PC-3 (cell line): ENCODE measurements at regions of chr2 and their contacts with region 1.

Region 1: GRCh38 chr2:138501425-138502283 is at the start of gene SPOPL:
- DNase-seq: peak; percentile 92
- ATAC-seq: peak; percentile 88
- H3K4me3 ChIP-seq: peak within 1 kb of the TSS; percentile 93
- H3K27ac ChIP-seq: peak within 1 kb of the TSS; percentile 80
- H3K4me1 ChIP-seq: peaks cover 39% of the 10 kb centered on the region
- H3K27me3 ChIP-seq: no peaks in the 10 kb centered on the region
- CTCF ChIP-seq: no peak
- total RNA-seq, gene SPOPL: 9.3 and 10.2 TPM in 2 replicates

Region 2: DNA sequence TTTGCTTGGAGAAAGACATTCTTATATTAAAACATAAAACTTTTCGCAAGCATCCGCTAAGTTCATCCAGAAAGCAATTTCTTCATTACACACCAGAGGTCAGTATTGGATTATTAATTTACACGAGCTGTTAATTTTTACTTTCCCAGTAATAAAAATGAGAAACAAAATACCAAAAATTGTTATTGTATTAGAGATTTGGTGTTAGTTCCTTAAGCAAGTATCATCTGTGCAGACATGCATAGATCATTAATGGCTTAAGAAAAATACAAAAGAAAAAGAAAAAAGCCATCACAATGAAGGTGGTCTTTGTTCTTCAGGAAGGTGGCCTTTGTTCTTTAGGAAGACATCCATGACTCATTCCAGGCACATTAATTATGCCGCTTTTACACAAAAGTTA is 591.0 kb before region 1 on chr2:
- CTCF ChIA-PET with region 1: no interaction called
- POLR2A ChIA-PET with region 1: no interaction called
- intact Hi-C with region 1: loop called (anchors 10 kb)
- DNase-seq: peak; percentile 71
- ATAC-seq: no peak
- H3K4me3 ChIP-seq: no peak overlapping the region
- H3K27ac ChIP-seq: no peak overlapping the region
- H3K4me1 ChIP-seq: no peaks in the 10 kb centered on the region
- H3K27me3 ChIP-seq: no peaks in the 10 kb centered on the region
- CTCF ChIP-seq: peak; percentile 83

Region 3: DNA sequence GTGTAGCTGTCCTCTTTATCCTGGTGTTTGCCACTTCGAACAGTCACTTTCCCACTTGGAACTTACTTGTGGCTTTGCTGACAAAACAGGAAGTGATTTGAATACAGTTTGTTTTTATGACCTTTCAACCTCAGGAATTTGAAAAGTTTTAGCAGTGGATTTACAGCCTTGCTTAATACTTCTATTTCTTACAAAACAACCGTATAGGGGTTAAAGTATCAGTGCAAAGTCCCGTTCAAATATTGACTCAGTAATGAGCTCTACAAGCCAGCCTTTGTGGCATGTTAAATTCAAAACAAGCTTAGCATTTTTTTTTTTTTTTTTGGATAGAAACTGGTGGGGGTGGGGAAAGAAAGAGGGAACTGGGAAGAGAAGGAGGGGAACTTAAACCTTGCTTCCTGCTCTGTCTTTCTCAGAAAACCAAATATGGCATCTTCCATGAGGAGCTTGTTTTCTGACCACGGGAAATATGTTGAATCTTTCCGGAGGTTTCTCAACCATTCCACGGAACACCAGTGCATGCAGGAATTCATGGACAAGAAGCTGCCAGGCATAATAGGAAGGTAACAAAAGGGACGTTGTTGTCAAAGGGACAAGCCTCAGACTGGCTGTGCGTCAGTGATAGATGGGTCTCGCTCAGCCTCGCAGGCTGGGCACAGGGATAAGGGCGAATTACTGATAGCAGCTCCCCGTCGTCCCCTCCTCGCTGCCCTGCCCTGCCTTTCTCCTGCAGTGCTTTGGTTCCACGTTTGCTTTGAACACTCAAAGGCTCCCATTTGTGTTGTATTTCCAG is 537.4 kb before region 1 on chr2 and contains the start of gene HNMT:
- CTCF ChIA-PET with region 1: no interaction called
- POLR2A ChIA-PET with region 1: no interaction called
- intact Hi-C with region 1: loop called (anchors 10 kb)
- DNase-seq: peak; percentile 84
- ATAC-seq: peak; percentile 77
- H3K4me3 ChIP-seq: peak within 1 kb of the TSS; percentile 71
- H3K27ac ChIP-seq: peak within 1 kb of the TSS; percentile 75
- H3K4me1 ChIP-seq: peaks cover 42% of the 10 kb centered on the region
- H3K27me3 ChIP-seq: no peaks in the 10 kb centered on the region
- CTCF ChIP-seq: no peak
- total RNA-seq, gene HNMT: 6.9 and 7.1 TPM in 2 replicates

Region 4: DNA sequence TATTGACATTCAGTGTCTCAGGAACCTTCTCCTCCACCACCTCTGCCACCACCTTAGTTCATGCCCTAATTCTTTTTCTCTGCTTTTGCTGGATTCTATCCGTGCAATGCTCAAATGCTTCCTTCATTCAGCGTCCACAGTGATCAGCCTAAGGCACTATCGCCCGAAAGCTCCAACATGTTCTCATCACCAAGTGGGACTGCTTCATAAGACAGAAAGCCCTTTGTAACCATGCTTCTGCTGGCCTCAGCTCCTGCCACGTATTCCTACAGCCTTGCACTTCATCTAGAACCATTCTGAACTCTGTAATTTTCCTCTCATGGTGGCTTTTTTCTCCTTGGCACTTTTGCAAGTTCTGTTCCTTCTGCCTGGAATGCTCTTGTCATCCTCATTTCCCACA is 314.4 kb before region 1 on chr2:
- CTCF ChIA-PET with region 1: no interaction called
- POLR2A ChIA-PET with region 1: no interaction called
- intact Hi-C with region 1: no loop called
- DNase-seq: no peak
- ATAC-seq: no peak
- H3K4me3 ChIP-seq: no peak overlapping the region
- H3K27ac ChIP-seq: no peak overlapping the region
- H3K4me1 ChIP-seq: no peaks in the 10 kb centered on the region
- H3K27me3 ChIP-seq: no peaks in the 10 kb centered on the region
- CTCF ChIP-seq: no peak

Region 5: GRCh38 chr2:138267161-138267901 is 234.3 kb before region 1 on chr2:
- CTCF ChIA-PET with region 1: no interaction called
- POLR2A ChIA-PET with region 1: no interaction called
- intact Hi-C with region 1: loop called (anchors 5 kb)
- DNase-seq: peak; percentile 82
- ATAC-seq: peak; percentile 71
- H3K4me3 ChIP-seq: no peak overlapping the region; the same call in 1 of the 2 replicates
- H3K27ac ChIP-seq: peak overlapping the region; percentile 74
- H3K4me1 ChIP-seq: peaks cover 21% of the 10 kb centered on the region
- H3K27me3 ChIP-seq: no peaks in the 10 kb centered on the region
- CTCF ChIP-seq: no peak

Region 6: DNA sequence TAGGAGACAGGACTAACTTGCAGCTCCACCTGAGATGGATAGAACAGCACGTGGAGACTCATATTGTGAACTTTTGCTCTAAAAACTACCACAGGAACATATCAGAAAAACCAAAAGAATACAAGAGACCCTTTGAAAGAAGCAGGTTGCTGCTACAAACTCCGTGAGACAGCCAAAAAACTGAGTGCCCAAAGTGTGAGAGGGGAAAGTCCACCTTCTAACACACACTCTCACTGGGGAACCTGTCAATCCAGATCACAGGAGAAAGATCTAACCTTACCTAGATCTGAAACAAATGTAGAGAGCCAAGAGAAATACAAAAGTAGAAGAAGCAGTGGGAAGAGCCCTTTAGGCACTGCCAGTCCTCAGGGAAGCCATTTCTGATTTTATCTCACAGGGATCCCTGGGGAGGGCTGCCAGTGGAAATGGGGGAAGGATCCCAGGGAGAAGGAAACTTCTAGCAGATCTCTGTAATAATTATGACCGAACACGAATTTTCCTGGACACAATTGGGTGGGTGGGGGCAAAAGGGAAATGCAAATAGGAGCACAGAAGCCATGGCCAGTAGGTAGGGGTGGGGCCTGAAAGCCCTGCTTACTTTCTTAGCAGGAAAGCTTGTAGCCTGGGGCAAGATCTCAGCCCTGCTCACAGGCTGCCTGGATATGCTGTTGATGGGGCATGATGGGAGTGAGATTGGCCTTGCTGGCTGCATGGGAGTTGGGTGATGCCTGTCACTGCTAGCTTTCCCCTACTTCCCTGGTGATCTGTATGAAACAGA is 46.2 kb before region 1 on chr2:
- CTCF ChIA-PET with region 1: no interaction called
- POLR2A ChIA-PET with region 1: no interaction called
- intact Hi-C with region 1: no loop called
- DNase-seq: no peak
- ATAC-seq: no peak
- H3K4me3 ChIP-seq: no peak overlapping the region
- H3K27ac ChIP-seq: no peak overlapping the region
- H3K4me1 ChIP-seq: no peaks in the 10 kb centered on the region
- H3K27me3 ChIP-seq: no peaks in the 10 kb centered on the region
- CTCF ChIP-seq: no peak

Region 7: GRCh38 chr2:138602166-138602460 is 100.5 kb after region 1 on chr2:
- CTCF ChIA-PET with region 1: no interaction called
- POLR2A ChIA-PET with region 1: no interaction called
- intact Hi-C with region 1: loop called (anchors 5 kb)
- DNase-seq: no peak
- ATAC-seq: no peak
- H3K4me3 ChIP-seq: no peak overlapping the region
- H3K27ac ChIP-seq: no peak overlapping the region
- H3K4me1 ChIP-seq: peaks cover 18% of the 10 kb centered on the region
- H3K27me3 ChIP-seq: no peaks in the 10 kb centered on the region
- CTCF ChIP-seq: no peak

Region 8: DNA sequence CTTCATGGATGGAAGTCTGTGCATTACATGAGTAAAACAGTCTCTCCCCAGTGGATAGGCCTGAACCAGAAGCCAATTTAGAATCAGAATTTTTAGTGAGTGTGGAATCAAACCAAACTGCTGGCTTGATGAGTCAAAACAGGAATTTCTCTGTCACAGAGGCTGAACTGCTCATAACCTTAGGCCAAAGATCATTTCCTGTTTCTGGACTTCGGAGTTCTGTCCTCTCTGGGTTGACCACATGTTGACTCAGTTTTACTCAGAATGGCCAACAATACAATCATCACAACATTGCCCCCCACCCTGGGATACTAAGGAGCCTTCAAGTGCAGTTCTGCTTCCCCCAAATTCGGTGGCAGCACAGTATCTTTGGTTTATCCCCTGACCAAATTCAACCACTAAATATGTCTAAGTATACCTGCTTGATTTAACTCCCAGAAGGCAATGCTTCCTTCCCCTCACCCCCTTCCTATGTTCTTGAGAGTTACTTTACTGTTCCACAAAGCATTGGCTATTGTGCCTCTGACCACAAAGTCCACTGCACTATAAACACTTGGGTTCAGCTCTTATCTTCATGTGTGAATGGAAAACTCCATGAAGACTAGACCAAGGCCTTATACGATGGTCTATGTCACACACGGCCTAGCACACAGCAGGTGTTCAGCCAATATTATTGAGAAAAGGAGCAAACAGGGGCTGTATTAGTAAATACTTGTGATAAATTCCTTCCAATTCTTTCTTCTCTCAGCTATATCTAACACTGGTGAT is 210.7 kb after region 1 on chr2:
- CTCF ChIA-PET with region 1: no interaction called
- POLR2A ChIA-PET with region 1: no interaction called
- intact Hi-C with region 1: loop called (anchors 5 kb)
- DNase-seq: peak; percentile 40
- ATAC-seq: peak; percentile 35; the same call in 1 of the 2 replicates
- H3K4me3 ChIP-seq: no peak overlapping the region
- H3K27ac ChIP-seq: no peak overlapping the region
- H3K4me1 ChIP-seq: peaks cover 10% of the 10 kb centered on the region
- H3K27me3 ChIP-seq: no peaks in the 10 kb centered on the region
- CTCF ChIP-seq: no peak

Region 9: GRCh38 chr2:138787053-138787666 is 285.5 kb after region 1 on chr2:
- CTCF ChIA-PET with region 1: no interaction called
- POLR2A ChIA-PET with region 1: no interaction called
- intact Hi-C with region 1: loop called (anchors 5 kb)
- DNase-seq: peak; percentile 74
- ATAC-seq: no peak; the same call in 1 of the 2 replicates
- H3K4me3 ChIP-seq: no peak overlapping the region
- H3K27ac ChIP-seq: no peak overlapping the region
- H3K4me1 ChIP-seq: no peaks in the 10 kb centered on the region
- H3K27me3 ChIP-seq: peaks cover 12% of the 10 kb centered on the region
- CTCF ChIP-seq: peak; percentile 89